IMR-90 (cell line): ENCODE measurements at regions of chrX and their contacts with region 1.

Region 1: GRCh38 chrX:103711533-103712369 is 1.0 kb downstream of the TMEM31 start:
- DNase-seq: peak; percentile 58
- ATAC-seq: peak; percentile 62
- H3K4me3 ChIP-seq: no peak overlapping the region
- H3K27ac ChIP-seq: no peak overlapping the region
- H3K4me1 ChIP-seq: peaks cover 6% of the 10 kb centered on the region
- H3K27me3 ChIP-seq: peaks cover 3% of the 10 kb centered on the region; the same call in 1 of the 2 replicates
- CTCF ChIP-seq: peak; percentile 52
- POLR2A ChIP-seq: no peak
- RAD21 ChIP-seq: peak; percentile 44

Region 2: DNA sequence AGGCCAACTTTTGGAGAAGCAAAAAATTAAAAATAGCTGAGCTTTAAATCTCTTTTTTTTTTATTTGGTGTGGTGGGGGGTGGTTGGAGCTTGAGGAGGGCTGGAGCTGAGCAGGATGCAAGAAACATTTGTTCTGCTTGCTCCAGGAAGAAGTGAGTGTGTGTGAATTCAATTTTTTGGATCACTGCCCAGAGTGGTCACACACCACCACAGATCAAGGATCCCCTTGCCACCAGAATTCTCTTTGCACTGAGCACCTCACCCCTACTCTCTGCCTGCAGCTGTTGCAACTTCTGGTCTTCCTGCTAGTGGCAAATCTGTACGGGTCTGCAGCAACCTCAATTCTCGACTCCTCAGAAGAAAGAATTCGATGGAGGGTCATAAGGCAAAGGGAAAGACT is 45.0 kb after region 1 on chrX:
- CTCF ChIA-PET with region 1: no interaction called
- POLR2A ChIA-PET with region 1: no interaction called
- dilution Hi-C with region 1: no loop called
- in situ Hi-C with region 1: no loop called
- intact Hi-C with region 1: no loop called
- DNase-seq: no peak
- ATAC-seq: no peak
- H3K4me3 ChIP-seq: no peak overlapping the region
- H3K27ac ChIP-seq: no peak overlapping the region
- H3K4me1 ChIP-seq: no peaks in the 10 kb centered on the region
- H3K27me3 ChIP-seq: peaks cover 28% of the 10 kb centered on the region
- CTCF ChIP-seq: no peak
- POLR2A ChIP-seq: no peak
- RAD21 ChIP-seq: no peak

Region 3: DNA sequence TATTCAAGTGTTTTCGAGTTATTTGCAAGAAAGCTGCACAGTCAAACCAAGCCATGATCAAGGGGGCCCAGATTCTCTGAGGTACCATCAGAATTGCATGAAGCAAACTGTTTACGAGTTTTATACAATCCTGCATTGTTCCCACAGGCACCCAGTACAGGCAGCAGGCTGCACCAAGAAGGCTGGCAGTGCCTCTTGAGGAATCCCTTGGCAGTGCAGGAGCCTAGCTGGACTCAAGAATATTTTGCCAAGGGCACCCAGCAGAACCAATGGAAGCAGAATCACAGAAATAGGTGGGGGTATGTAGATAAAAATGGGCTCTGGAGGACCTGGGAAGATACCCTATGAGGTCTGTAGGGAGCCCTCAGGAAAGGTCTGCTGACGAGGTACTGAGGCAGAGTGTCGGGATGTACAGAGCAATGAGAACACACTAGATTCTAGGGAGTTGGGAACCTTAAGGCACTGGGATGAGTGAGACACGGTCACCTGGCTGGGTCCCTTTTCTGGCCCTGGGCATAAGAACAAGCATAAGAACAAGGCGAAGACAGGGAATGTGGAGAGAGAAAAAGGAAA is 62.4 kb after region 1 on chrX:
- CTCF ChIA-PET with region 1: no interaction called
- POLR2A ChIA-PET with region 1: no interaction called
- dilution Hi-C with region 1: no loop called
- in situ Hi-C with region 1: no loop called
- intact Hi-C with region 1: loop called (anchors 1 kb)
- DNase-seq: peak; percentile 52
- ATAC-seq: peak; percentile 90
- H3K4me3 ChIP-seq: no peak overlapping the region
- H3K27ac ChIP-seq: no peak overlapping the region
- H3K4me1 ChIP-seq: no peaks in the 10 kb centered on the region
- H3K27me3 ChIP-seq: peaks cover 32% of the 10 kb centered on the region
- CTCF ChIP-seq: peak; percentile 57
- POLR2A ChIP-seq: no peak
- RAD21 ChIP-seq: peak; percentile 64